Head of caudate nucleus (tissue), 42 donors: ENCODE measurements at regions of chr5 and their contacts with region 1.

Region 1: DNA sequence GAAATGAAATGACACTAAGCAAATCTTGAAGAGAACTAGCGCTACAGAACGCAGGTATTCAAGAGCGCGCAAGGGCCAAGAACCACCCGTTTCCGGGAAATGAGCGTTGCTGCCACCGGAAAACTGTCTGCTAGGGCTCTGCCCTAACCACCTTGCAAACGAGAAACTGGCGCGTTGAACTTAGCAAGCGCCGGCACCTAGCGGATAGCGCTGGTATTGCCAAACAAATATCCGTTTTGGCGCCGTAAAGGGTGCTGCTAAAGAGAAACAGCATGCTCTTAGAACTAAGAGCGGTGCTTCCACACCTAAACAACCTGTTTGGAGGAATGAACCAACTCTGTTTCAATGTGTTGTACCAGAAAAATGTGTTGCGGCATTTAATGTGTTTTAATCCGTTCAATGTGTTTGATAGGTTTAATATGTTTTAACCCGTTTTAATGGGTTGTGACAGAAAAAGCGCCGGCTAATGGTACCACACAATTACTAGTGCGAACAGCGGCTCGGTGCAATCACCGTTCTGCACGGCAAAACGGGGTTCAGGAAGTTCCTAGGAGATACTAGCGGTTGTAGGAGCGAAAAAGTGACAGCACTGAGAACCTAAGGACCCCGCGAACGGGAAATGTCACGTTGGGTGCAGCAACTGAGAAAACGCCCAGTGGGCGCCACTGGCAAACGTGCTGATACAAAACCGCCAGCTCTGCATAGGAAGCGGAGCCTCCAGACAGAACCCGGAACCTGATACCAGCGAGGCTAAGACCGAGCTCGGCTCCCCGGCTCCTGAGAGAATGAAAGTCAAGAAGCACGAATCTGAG is at the start of gene ANXA2R:
- DNase-seq: peak; percentile 49 to 94 (median 81)

Region 2: GRCh38 chr5:42908509-42909488 is 131.7 kb before region 1 on chr5:
- intact Hi-C with region 1: loop called (anchors 10 kb)
- DNase-seq: peak; percentile 86 to 97 (median 93)

Region 3: DNA sequence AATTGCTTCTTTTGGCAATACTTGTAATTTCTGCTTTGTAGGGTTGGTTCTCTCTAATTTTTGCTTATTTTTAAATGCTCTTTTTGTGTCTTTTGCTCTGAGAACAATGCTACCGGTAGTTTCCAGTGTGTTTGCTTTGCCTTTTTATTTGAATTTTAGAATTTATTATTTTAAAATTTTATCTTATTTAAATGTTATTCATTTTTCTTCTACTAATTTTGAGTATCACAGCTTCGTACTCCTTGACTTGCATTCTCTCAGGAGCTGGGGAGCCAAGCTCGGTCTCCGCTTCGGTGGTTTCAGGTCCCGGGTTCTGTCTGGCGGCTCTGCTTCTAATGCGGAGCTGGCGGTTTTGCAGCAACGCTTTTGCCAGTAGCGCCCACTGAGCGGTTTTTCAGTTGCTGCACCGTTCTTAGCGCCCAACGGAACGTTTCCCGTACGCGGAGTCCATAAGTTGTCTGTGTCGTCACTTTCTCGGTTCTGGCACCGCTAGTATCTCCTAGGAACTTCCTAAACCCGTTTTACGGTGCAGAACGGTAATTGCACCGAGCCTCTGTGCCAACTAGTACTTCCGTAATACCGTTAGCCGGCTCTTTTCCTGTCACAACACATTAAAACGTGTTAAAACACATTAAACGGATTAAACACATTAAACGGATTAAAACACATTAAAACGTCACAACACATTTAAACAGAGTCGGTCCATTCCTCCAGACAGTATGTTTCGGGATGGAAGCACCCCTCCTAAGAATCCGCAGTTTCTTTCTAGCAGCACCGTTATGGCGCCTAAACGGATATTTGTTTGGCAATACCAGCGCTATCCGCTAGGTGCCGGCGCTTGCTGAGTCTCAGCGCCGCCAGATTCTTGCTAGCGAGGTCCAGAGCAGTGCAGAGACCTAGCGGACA is 46.0 kb before region 1 on chr5:
- intact Hi-C with region 1: loop called (anchors 2 kb)
- DNase-seq: peak; percentile 45 to 92 (median 78)

Region 4: DNA sequence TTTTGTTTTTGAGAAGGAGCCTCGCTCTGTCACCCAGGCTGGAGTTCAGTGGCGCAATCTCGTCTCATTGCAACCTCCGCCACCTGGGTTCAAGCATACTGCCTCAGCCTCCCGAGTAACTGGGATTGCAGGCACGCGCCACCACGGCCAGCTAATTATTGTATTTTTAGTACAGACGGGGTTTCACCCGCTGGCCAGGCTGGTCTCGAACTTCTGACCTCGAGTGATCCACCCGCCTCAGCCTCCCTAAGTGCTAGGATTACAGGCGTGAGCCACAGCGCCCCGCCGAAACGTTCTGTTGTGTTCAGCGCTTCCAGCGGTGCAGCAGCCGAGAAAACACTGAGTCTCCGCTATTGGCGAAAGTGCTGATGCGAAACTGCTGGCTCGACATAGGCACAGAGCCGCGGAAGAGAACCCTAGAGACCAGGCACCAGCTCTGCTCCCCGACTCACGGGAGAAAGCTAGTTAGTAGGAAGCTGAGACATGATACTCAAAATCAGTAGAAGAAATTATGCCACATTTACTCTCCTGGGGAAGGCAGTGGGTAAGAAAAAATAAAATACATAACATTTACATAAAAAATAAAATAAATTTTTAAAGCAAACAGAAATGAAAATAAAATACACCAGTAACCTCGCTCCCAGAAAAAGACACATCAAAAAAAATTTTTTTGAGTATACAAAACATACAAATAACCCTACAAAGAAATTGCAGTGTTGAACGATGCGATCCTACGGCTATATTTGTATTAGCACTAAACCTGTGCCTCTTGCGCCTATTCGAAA is 31.9 kb before region 1 on chr5:
- intact Hi-C with region 1: loop called (anchors 5 kb)
- DNase-seq: peak; percentile 49 to 91 (median 80)

Region 5: DNA sequence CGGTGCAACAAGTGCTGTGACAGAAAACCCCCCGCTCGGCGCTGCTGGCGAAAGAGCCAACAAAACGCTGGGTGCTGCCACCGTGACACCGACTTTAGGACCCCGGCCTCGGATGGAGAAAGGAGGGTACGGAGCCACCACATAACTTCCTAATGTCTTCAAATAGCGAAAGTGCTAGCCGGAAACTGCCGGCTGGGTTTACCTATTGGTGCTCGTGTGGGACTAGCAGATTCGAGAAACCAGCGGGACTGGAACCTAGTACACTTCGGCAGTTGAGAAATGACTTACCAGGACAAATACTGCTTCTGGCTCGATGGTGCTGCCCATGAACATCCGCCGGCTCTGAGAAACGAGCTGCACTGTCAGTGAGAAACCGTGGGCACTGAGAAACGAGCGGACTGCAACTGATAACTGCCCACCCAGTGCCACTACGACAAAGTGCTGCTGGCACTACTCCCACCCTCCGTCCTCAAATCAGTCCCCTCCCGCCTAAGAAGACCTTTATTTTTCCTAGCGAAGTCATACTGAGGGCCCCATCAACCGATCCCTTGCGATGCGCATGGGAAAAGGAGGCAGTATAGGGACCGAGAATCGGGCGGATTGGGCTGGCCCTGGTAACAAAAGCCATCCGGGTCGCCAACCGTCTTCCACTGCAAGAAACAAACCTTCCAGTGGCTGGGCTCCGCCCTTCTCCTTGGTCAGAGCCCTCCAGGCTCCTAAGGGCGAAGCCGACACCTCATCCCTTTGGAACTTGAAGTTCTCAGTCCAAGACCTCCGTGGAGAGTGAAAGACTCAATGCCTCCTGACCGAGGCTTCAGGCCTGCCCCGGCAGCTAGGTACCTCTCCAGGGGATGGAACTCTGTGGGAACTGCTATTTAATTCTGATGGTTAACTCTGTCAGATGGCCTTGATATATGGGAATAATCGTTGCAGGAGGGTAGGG is 26.6 kb after region 1 on chr5:
- intact Hi-C with region 1: loop called (anchors 1 kb)
- DNase-seq: peak; percentile 75 to 96 (median 90)